AG04449 (cell line): ENCODE measurements at regions of chr16 and their contacts with region 1.

Region 1: DNA sequence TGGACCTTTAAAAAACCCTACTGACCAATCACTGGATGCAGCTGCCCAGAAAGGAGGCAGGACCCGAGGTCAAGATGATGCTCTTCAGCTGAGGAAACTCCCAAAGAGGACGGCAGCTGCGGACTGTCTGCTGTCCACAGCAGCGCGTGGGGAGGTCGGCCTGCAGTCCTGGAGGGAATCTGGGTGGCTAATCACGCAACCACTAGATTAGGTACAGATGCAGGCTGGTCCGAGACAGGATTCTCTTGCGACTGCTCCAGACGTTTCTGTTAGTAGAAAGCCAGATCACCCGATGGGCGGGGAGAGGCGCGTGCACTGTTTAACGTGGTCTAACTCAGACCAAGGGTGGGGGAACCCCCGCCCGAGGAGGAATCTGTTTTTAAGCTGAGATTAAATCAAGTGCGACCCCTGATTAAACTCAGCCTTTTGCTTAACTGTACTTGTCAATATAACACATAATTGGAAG is 8.8 kb downstream of the CTRB2 start:
- DNase-seq: no peak
- H3K4me3 ChIP-seq: no peak overlapping the region
- CTCF ChIP-seq: no peak

Region 2: DNA sequence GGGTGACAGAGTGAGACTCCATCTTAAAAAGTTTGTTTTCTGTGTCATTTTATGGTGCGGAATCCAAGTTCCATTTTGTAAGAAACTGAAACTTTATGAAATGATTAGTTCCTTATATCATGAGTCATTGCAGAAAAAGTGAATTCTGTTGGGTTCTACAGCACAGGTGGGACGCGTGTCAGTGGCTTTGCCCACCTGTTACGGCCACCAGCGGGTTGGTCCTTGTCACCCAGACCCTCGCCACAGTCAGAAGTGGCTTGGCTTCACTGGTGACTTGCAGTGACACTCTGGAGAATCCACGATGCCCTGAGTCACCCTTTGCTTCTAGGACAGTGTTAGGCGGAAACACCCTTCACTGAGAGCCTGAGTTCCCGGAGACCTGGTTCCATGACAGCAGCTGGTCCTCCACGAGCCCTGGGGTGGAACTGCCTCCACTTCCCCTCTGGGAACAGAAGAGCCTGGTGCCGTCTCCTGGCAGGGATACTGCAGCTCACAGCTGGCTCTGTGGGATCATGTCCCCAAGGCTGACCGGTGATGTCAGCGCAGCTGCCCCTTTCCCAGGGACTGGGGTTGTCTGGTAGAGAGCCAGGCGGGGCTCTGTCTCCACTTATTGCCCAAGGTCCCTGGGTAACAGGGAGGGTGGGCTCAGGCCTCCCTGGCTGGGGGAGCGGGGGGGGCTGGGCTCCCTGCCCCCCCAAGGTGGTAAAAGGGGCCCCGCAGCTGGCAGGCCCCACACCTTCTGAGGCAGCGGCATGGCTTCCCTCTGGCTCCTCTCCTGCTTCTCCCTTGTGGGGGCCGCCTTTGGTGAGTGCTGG is 20.3 kb after region 1 on chr16 and contains the start of gene CTRB1:
- CTCF ChIA-PET with region 1: interaction called, 74 read pairs
- POLR2A ChIA-PET with region 1: no interaction called
- DNase-seq: no peak
- H3K4me3 ChIP-seq: no peak within 1 kb of the TSS
- CTCF ChIP-seq: no peak

Region 3: GRCh38 chr16:75319513-75320411 is 121.6 kb after region 1 on chr16:
- CTCF ChIA-PET with region 1: no interaction called
- POLR2A ChIA-PET with region 1: no interaction called
- DNase-seq: peak; percentile 74
- H3K4me3 ChIP-seq: peak overlapping the region; percentile 39
- CTCF ChIP-seq: no peak

Region 4: DNA sequence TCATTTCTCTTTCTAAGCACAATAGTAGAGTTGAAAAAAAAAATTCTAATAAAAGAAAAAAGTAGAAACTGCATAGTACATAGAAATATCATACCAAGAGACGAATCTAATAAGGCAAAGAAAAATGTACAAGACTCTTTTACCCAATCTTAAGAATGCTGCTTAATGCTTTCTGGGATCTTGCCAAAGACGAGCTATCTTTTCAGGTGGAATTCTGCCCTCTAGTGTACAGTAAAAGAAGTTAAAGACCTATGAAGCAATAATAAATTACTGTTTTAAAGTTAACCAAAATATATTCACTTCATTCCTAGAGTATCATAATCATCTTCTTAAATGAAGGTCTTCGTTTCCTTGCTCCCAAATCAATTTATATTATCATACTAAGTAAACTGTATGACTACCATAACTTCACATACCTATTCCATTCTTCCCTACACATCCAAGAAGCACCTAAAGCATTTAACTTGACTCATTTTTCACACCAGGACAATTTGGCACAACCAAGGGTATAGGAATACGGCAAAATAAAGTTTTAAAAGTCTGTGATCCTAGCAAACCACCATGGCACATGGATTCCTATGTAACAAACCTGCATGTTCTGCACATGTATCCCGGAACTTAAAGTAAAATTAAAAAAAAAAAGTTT is 187.5 kb after region 1 on chr16:
- CTCF ChIA-PET with region 1: interaction called, 342 read pairs
- POLR2A ChIA-PET with region 1: no interaction called
- DNase-seq: peak; percentile 71
- H3K4me3 ChIP-seq: no peak overlapping the region
- CTCF ChIP-seq: peak; percentile 26

Region 5: GRCh38 chr16:75420987-75421819 is 223.0 kb after region 1 on chr16:
- CTCF ChIA-PET with region 1: interaction called, 13 read pairs
- POLR2A ChIA-PET with region 1: no interaction called
- DNase-seq: no peak
- H3K4me3 ChIP-seq: no peak overlapping the region
- CTCF ChIP-seq: no peak

Region 6: DNA sequence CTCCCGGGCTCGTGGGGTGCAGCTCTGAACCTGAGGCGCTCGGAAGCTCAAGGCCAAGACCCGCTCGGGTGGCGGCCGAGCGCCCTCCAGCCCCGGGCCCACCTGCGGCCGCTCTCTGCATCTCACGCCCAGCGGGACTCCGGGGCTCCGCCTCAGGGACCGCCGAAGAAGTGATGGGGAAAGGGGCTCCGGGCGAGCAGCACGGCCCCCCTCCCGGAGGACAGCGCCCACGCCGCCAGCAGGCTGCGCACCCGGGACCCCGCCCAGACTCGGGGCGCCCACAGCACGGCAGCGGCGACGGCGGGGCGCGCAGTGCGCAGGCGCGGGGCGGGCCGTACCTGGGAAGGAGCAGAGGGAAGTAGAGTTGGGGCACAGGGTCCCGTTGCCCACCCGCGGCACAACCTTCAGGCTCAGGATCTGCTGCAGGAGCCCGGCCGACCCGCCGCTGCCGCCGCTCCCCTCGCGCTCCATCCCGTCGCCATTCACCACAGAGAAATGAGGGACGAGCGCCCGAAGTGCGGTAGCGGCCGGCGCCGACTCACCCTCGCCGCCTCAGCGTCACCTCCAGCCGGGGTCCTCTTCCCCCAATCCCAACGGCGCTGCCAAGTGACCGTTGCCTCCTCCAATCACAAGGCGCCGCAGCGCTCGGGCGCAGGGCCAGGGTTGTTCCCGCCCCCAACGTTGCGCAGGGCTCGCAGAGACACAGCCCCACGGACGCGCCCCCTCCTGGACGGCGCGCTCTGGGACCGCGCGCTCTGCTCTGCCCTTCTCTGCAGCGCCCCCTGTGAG is 266.2 kb after region 1 on chr16 and contains the start of gene TMEM170A:
- CTCF ChIA-PET with region 1: interaction called, 70 read pairs
- POLR2A ChIA-PET with region 1: interaction called, 3 read pairs
- DNase-seq: peak; percentile 85
- H3K4me3 ChIP-seq: peak within 1 kb of the TSS; percentile 85
- CTCF ChIP-seq: peak; percentile 99

Region 7: GRCh38 chr16:75550211-75550662 is 352.1 kb after region 1 on chr16:
- CTCF ChIA-PET with region 1: interaction called, 11 read pairs
- POLR2A ChIA-PET with region 1: no interaction called
- DNase-seq: no peak
- H3K4me3 ChIP-seq: no peak overlapping the region
- CTCF ChIP-seq: peak; percentile 17